GM12878 (cell line): ENCODE measurements at regions of chr12 and their contacts with region 1.

Region 1: GRCh38 chr12:27434673-27435565 is 11.6 kb upstream of the SMCO2 start:
- DNase-seq: no peak
- ATAC-seq: peak; percentile 74
- H3K4me3 ChIP-seq: no peak overlapping the region
- H3K27ac ChIP-seq: no peak overlapping the region
- H3K4me1 ChIP-seq: peaks cover 16% of the 10 kb centered on the region
- H3K27me3 ChIP-seq: no peaks in the 10 kb centered on the region
- CTCF ChIP-seq: peak; percentile 46 to 65 (median 51); a peak in 5 of 6 replicates
- EP300 ChIP-seq: no peak
- POLR2A ChIP-seq: no peak
- RAD21 ChIP-seq: peak; percentile 50

Region 2: GRCh38 chr12:27424631-27425230 is 10.2 kb before region 1 on chr12:
- CTCF ChIA-PET with region 1: interaction called, 30 read pairs
- POLR2A ChIA-PET with region 1: no interaction called
- RAD21 ChIA-PET with region 1: interaction called, 3 read pairs
- SMC1A ChIA-PET with region 1: interaction called, 6 read pairs
- in situ Hi-C with region 1: no loop called
- intact Hi-C with region 1: no loop called
- DNase-seq: no peak
- ATAC-seq: peak; percentile 62
- H3K4me3 ChIP-seq: no peak overlapping the region
- H3K27ac ChIP-seq: no peak overlapping the region
- H3K4me1 ChIP-seq: no peaks in the 10 kb centered on the region
- H3K27me3 ChIP-seq: no peaks in the 10 kb centered on the region
- CTCF ChIP-seq: peak; percentile 38 to 48 (median 39); a peak in 5 of 6 replicates
- EP300 ChIP-seq: no peak
- POLR2A ChIP-seq: no peak
- RAD21 ChIP-seq: peak; percentile 45

Region 3: GRCh38 chr12:27464220-27464554 is 29.3 kb after region 1 on chr12:
- CTCF ChIA-PET with region 1: no interaction called
- POLR2A ChIA-PET with region 1: no interaction called
- RAD21 ChIA-PET with region 1: no interaction called
- SMC1A ChIA-PET with region 1: no interaction called
- in situ Hi-C with region 1: no loop called
- intact Hi-C with region 1: no loop called
- DNase-seq: no peak
- ATAC-seq: no peak
- H3K4me3 ChIP-seq: no peak overlapping the region
- H3K27ac ChIP-seq: no peak overlapping the region
- H3K4me1 ChIP-seq: peaks cover 5% of the 10 kb centered on the region; the same call in 1 of the 2 replicates
- H3K27me3 ChIP-seq: no peaks in the 10 kb centered on the region
- CTCF ChIP-seq: no peak
- EP300 ChIP-seq: no peak
- POLR2A ChIP-seq: no peak
- RAD21 ChIP-seq: no peak

Region 4: DNA sequence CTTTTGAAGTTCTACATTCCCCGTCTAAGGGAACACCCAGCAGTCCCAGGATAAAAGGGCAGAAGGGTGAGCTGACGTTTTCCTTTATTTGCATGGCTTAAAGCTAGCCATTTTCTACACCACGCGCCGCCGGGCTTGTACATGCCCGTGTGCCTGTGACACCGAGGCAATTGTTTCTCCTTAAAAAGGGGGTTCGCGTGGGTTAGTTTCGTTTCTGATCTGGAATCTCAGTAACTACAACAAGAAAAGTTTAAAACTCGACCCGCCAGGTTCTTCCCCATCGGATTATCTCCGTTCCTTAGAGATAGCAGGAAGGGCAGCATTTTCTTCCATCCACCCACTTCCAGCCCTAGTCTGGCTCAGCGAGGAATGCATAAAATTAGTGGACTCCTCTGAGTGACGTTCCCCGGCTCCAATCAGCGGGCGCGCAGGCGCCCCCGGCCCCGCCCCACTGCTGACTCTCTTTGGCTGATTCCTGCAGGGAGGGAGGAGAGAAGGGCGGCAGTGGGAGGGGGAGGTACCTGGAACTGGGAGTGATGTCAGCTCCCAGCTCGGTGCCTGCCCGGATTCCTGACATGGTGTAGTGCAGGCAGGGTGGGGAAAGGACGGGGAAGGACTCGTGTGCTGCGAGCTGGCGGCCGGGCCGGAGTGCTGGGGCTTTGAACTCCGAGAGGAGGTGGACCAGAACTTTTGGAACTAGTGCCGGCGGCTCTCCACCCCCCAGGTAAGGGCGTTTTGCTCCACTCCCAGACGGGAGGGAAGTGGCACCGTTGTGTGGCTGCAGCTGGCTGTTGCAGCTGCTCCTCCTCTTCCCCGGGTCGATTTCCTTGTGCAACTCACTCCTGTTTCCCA is 88.9 kb after region 1 on chr12 and contains the start of gene PPFIBP1:
- CTCF ChIA-PET with region 1: interaction called, 8 read pairs
- POLR2A ChIA-PET with region 1: interaction called, 4 read pairs
- RAD21 ChIA-PET with region 1: interaction called, 3 read pairs
- SMC1A ChIA-PET with region 1: interaction called, 4 read pairs
- in situ Hi-C with region 1: no loop called
- intact Hi-C with region 1: loop called (anchors 2 kb)
- DNase-seq: peak; percentile 91
- ATAC-seq: peak; percentile 98
- H3K4me3 ChIP-seq: peak within 1 kb of the TSS; percentile 73
- H3K27ac ChIP-seq: peak within 1 kb of the TSS; percentile 58
- H3K4me1 ChIP-seq: no peaks in the 10 kb centered on the region
- H3K27me3 ChIP-seq: no peaks in the 10 kb centered on the region
- CTCF ChIP-seq: peak in 1 of 3 experiments; percentile 23; a peak in 2 of 6 replicates
- EP300 ChIP-seq: no peak
- POLR2A ChIP-seq: peak; percentile 80
- RAD21 ChIP-seq: peak; percentile 43
- polyA plus RNA-seq, gene PPFIBP1: 0.47 to 0.55 TPM

Region 5: DNA sequence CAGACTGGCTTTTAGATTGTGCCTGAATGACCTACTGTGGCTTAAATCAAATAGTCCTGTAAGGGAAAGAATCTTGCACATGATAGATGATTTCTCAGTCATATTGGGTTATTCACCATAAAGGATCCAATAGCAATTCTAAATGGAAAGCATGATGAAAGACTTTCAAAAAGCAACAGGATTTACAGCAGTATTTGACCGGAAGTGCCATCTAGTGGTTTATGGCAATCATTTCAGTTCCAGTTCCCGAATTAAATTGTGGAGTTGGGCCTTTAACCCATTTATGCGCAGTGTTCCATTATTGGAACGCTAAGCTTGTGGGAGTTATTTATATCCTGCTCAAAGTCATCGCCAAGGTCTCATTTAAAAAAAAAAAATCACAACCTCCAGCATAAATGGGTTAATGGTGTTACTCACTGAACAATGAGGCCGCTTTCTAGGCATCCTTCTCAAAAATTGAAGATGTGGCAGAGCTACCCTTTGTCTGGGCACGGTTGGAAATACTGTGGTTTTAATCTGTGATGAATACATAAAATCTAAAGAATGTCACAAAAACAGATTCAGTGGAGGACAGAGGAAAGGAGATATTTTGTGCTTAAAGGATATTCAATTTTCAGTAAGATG is 200.5 kb after region 1 on chr12:
- CTCF ChIA-PET with region 1: interaction called, 21 read pairs
- POLR2A ChIA-PET with region 1: no interaction called
- RAD21 ChIA-PET with region 1: interaction called, 4 read pairs
- SMC1A ChIA-PET with region 1: interaction called, 8 read pairs
- in situ Hi-C with region 1: no loop called
- intact Hi-C with region 1: no loop called
- DNase-seq: no peak
- ATAC-seq: no peak
- H3K4me3 ChIP-seq: no peak overlapping the region
- H3K27ac ChIP-seq: no peak overlapping the region
- H3K4me1 ChIP-seq: no peaks in the 10 kb centered on the region
- H3K27me3 ChIP-seq: no peaks in the 10 kb centered on the region
- CTCF ChIP-seq: peak; percentile 34 to 52 (median 44); a peak in 5 of 6 replicates
- EP300 ChIP-seq: no peak
- POLR2A ChIP-seq: no peak
- RAD21 ChIP-seq: peak; percentile 76

Region 6: GRCh38 chr12:27703710-27704452 is 269.0 kb after region 1 on chr12:
- CTCF ChIA-PET with region 1: interaction called, 8 read pairs
- POLR2A ChIA-PET with region 1: no interaction called
- RAD21 ChIA-PET with region 1: interaction called, 3 read pairs
- SMC1A ChIA-PET with region 1: no interaction called
- in situ Hi-C with region 1: no loop called
- intact Hi-C with region 1: loop called (anchors 1 kb)
- DNase-seq: peak; percentile 43
- ATAC-seq: peak; percentile 99
- H3K4me3 ChIP-seq: no peak overlapping the region
- H3K27ac ChIP-seq: no peak overlapping the region
- H3K4me1 ChIP-seq: no peaks in the 10 kb centered on the region
- H3K27me3 ChIP-seq: no peaks in the 10 kb centered on the region
- CTCF ChIP-seq: peak; percentile 83 to 88 (median 88)
- EP300 ChIP-seq: no peak
- POLR2A ChIP-seq: no peak
- RAD21 ChIP-seq: peak; percentile 88